ENCODE measurements at regions of chr12 and their contacts with region 1.

Region 1: DNA sequence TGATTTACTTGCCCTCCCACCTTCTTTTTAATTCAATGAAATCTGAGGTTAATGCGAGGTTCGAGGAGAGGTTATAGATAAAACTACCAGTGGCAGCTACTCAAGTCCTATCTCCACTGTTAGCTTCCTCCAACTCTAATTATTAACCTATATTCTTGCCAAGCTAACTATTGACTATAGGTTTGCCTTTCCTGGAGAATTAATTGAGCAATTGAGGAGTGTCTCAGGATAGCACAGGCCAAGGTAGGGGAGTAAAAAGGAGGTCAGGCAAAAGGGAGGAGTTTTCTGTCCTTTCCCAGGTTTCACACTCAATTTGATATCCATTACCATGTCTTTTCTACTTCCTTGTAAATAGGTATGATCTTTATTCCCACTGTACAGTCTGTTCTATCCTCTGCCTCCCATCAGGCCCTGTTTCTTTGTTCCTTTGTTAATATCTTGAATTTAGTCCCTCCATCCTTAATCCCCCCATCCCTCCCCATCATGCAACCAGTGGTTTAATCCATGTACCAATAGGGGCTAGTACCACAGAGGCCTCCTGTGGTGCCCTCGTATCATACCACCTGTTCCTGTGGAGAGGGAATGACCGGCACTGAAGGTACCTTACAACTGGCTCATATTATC is 3.7 kb upstream of the SUOX start:
- DNase-seq: no peak
- ATAC-seq: no peak
- H3K4me3 ChIP-seq: no peak overlapping the region
- H3K4me1 ChIP-seq: no peaks in the 10 kb centered on the region
- CTCF ChIP-seq: no peak

Region 2: GRCh38 chr12:56029666-56030293 is 36.4 kb after region 1 on chr12:
- intact Hi-C with region 1: loop called in 1 of 2 experiments (anchors 5 kb)
- DNase-seq: peak in 1 of 3 donors; percentile 62
- ATAC-seq: peak; percentile 74
- H3K4me3 ChIP-seq: no peak overlapping the region
- H3K4me1 ChIP-seq: no peaks in the 10 kb centered on the region
- CTCF ChIP-seq: peak; percentile 55

Measured in mucosa of descending colon (tissue), 3 donors.